ENCODE measurements at regions of chrX and their contacts with region 1.

Region 1: DNA sequence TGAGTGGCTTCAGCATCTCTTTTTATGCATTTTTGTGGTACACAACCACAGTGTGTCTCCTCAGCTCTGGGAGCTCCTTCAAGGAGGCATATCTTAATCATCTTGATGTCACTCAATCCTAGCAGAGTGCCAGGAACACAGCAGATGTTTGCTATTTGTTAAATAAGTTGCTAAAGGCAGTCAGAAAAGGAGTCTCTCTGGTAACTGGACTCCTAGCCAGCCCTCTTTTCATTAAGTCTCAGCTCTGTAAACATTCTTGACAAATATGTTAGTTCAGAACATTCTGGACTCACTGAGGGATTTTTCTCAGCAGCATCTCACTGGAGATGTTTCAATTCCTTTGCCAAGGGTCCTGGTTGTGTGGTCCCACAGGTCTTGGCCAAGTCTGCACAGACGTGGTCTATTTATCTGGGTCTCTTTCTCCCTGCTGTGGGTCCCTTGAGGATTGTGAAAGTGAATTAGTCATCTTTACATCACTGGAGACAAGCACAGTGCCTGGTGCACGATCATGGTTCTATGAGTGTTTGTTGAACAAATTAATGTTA is 20.3 kb upstream of the FAM9C start:
- DNase-seq: peak in 1 of 2 donors; percentile 47
- H3K4me3 ChIP-seq: no peak overlapping the region
- H3K27ac ChIP-seq: no peak overlapping the region
- H3K4me1 ChIP-seq: no peaks in the 10 kb centered on the region
- H3K27me3 ChIP-seq: no peaks in the 10 kb centered on the region
- CTCF ChIP-seq: no peak
- POLR2A ChIP-seq: no peak

Region 2: GRCh38 chrX:13005661-13006473 is 58.8 kb before region 1 on chrX:
- intact Hi-C with region 1: loop called (anchors 10 kb)
- DNase-seq: no peak
- H3K4me3 ChIP-seq: no peak overlapping the region
- H3K27ac ChIP-seq: no peak overlapping the region
- H3K4me1 ChIP-seq: no peaks in the 10 kb centered on the region
- H3K27me3 ChIP-seq: no peaks in the 10 kb centered on the region
- CTCF ChIP-seq: no peak
- POLR2A ChIP-seq: no peak

Measured in uterus (tissue), 4 donors.